CD4-positive, alpha-beta T cell (primary cell): ENCODE measurements at regions of chr9 and their contacts with region 1.

Region 1: DNA sequence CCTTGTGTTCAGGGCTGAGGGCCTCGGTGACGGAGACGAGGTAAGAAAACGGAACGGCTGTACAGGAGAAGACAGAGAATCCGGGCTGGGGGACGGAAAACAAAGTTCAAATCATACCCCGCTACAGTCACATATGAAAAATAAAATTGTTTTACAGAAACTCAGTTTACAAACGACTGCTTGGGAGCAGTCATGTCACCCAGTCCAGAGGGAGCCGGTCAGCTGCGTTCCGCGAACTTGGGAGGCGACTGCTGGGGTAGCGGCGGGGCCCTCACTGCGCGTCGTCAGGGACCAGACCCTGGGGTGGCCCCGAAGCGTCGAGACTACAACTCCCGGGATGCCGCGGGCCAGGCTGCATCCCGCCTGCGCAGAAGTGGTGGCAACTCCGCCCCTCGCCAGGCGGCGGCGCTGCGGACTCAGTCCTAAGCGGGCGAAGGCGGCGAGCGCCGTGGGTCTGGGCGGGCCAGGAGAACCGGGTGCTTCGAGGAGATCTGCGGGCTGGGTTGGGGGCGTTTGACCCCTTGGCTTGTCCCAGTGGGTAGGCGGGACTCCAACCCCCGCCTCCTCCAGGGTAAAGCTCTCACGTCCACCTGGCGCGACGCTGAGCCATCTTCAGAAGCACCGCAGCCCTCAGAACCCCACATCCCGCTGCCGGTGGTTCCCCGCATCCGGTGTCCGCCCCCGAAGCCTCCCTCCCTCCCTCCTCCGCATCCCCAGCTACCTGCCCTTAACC is 4.0 kb downstream of the SIT1 start:
- DNase-seq: peak; percentile 83 to 96 (median 88)
- ATAC-seq: peak; percentile 83
- H3K4me3 ChIP-seq: peak overlapping the region; percentile 72
- H3K4me3 Mint-ChIP-seq: peak overlapping the region; percentile 94
- H3K27ac ChIP-seq: peak overlapping the region; percentile 80 to 82
- H3K27ac Mint-ChIP-seq: peak overlapping the region; percentile 94
- H3K4me1 ChIP-seq: peaks cover 78% of the 10 kb centered on the region
- H3K4me1 Mint-ChIP-seq: peaks cover 73% of the 10 kb centered on the region
- H3K27me3 ChIP-seq: no peaks in the 10 kb centered on the region
- H3K27me3 Mint-ChIP-seq: no peaks in the 10 kb centered on the region
- CTCF ChIP-seq: peak; percentile 96

Region 2: DNA sequence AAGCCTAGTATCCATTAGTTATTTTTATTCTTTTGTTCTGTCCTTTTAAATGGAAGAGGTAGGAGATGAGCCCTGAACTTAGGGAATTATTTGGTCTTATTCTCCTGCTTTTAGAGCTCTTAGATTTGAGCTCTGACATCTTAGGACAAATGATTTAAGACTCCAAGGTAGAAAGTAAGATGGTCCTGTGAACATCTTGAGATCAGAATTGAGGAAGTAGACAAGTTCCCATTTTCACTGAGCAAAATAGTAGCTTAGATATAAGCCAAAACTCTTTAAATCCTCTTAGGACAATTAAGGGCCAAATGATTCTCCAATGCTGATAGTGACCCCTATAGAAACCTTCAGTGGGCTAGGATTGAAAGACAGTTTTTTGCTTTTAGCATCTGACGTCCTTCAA is 209.8 kb before region 1 on chr9:
- CTCF ChIA-PET with region 1: no interaction called
- POLR2A ChIA-PET with region 1: no interaction called
- intact Hi-C with region 1: no loop called
- DNase-seq: no peak
- ATAC-seq: no peak
- H3K4me3 ChIP-seq: no peak overlapping the region
- H3K4me3 Mint-ChIP-seq: no peak overlapping the region
- H3K27ac ChIP-seq: no peak overlapping the region
- H3K27ac Mint-ChIP-seq: no peak overlapping the region
- H3K4me1 ChIP-seq: no peaks in the 10 kb centered on the region
- H3K4me1 Mint-ChIP-seq: no peaks in the 10 kb centered on the region
- H3K27me3 ChIP-seq: no peaks in the 10 kb centered on the region
- H3K27me3 Mint-ChIP-seq: peaks cover 2% of the 10 kb centered on the region
- CTCF ChIP-seq: no peak

Region 3: DNA sequence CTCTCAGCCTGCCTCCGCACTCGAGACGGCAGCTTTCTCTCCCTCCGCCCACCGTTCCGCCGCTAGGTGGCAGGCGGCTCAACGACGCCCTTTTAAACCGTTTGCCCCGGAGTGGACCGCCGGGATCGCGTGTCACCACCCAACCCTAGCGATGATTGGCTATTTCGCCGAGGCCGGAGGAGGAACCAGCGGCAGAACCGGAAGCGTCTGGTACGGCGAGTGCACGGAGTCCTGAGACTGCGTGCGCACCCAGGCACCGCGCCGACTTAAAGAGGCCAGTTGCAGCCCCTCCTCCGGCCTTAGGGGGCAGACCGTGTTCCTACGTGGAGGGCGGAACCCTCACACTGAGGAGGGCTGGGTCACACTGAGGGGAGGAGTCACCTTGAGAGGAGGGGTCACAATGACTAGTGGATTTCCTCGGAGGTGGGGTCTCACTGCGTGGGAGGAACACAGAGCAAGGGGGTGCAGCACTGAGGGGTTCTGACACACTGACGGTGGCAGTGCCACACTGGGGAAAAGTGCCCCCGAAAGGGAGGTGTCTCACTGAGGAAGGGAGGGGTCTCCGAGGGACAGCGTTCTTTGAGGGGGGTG is 42.6 kb before region 1 on chr9:
- CTCF ChIA-PET with region 1: interaction called, 31 read pairs
- POLR2A ChIA-PET with region 1: interaction called, 45 read pairs
- intact Hi-C with region 1: loop called (anchors 1 to 2 kb)
- DNase-seq: peak; percentile 98 to 100 (median 99)
- ATAC-seq: peak; percentile 88
- H3K4me3 ChIP-seq: peak overlapping the region; percentile 94
- H3K4me3 Mint-ChIP-seq: peak overlapping the region; percentile 99
- H3K27ac ChIP-seq: peak overlapping the region; percentile 73 to 89
- H3K27ac Mint-ChIP-seq: peak overlapping the region; percentile 96
- H3K4me1 ChIP-seq: peaks cover 43% of the 10 kb centered on the region
- H3K4me1 Mint-ChIP-seq: peaks cover 33% of the 10 kb centered on the region
- H3K27me3 ChIP-seq: no peaks in the 10 kb centered on the region
- H3K27me3 Mint-ChIP-seq: no peaks in the 10 kb centered on the region
- CTCF ChIP-seq: peak; percentile 98

Region 4: GRCh38 chr9:35616681-35617459 is 29.8 kb before region 1 on chr9:
- CTCF ChIA-PET with region 1: interaction called, 26 read pairs
- POLR2A ChIA-PET with region 1: interaction called, 35 read pairs
- intact Hi-C with region 1: no loop called
- DNase-seq: peak; percentile 42 to 89 (median 62)
- ATAC-seq: peak; percentile 86
- H3K4me3 ChIP-seq: peak overlapping the region; percentile 77
- H3K4me3 Mint-ChIP-seq: peak overlapping the region; percentile 86
- H3K27ac ChIP-seq: peak overlapping the region; percentile 27 to 70
- H3K27ac Mint-ChIP-seq: peak overlapping the region; percentile 72
- H3K4me1 ChIP-seq: peaks cover 40% of the 10 kb centered on the region
- H3K4me1 Mint-ChIP-seq: peaks cover 50% of the 10 kb centered on the region
- H3K27me3 ChIP-seq: no peaks in the 10 kb centered on the region
- H3K27me3 Mint-ChIP-seq: no peaks in the 10 kb centered on the region
- CTCF ChIP-seq: peak; percentile 47

Region 5: GRCh38 chr9:35664531-35665470 is 18.1 kb after region 1 on chr9 and contains the start of gene ARHGEF39:
- CTCF ChIA-PET with region 1: interaction called, 94 read pairs
- POLR2A ChIA-PET with region 1: interaction called, 27 read pairs
- intact Hi-C with region 1: no loop called
- DNase-seq: peak in 12 of 14 experiments; percentile 35 to 84 (median 55)
- ATAC-seq: peak; percentile 74
- H3K4me3 ChIP-seq: peak within 1 kb of the TSS; percentile 61
- H3K4me3 Mint-ChIP-seq: peak within 1 kb of the TSS; percentile 85
- H3K27ac ChIP-seq: peak within 1 kb of the TSS; percentile 31 to 50
- H3K27ac Mint-ChIP-seq: peak within 1 kb of the TSS; percentile 85
- H3K4me1 ChIP-seq: peaks cover 61% of the 10 kb centered on the region
- H3K4me1 Mint-ChIP-seq: peaks cover 71% of the 10 kb centered on the region
- H3K27me3 ChIP-seq: no peaks in the 10 kb centered on the region
- H3K27me3 Mint-ChIP-seq: no peaks in the 10 kb centered on the region
- CTCF ChIP-seq: no peak
- total RNA-seq, gene ARHGEF39: 0.08 to 0.17 TPM

Region 6: GRCh38 chr9:35690431-35691333 is 44.0 kb after region 1 on chr9:
- CTCF ChIA-PET with region 1: interaction called, 32 read pairs
- POLR2A ChIA-PET with region 1: interaction called, 14 read pairs
- intact Hi-C with region 1: no loop called
- DNase-seq: peak in 8 of 14 experiments; percentile 12 to 57 (median 38)
- ATAC-seq: peak; percentile 63
- H3K4me3 ChIP-seq: peak overlapping the region; percentile 88
- H3K4me3 Mint-ChIP-seq: peak overlapping the region; percentile 92
- H3K27ac ChIP-seq: peak overlapping the region; percentile 40 to 55
- H3K27ac Mint-ChIP-seq: peak overlapping the region; percentile 73
- H3K4me1 ChIP-seq: peaks cover 26% of the 10 kb centered on the region
- H3K4me1 Mint-ChIP-seq: peaks cover 28% of the 10 kb centered on the region
- H3K27me3 ChIP-seq: no peaks in the 10 kb centered on the region
- H3K27me3 Mint-ChIP-seq: no peaks in the 10 kb centered on the region
- CTCF ChIP-seq: no peak

Region 7: DNA sequence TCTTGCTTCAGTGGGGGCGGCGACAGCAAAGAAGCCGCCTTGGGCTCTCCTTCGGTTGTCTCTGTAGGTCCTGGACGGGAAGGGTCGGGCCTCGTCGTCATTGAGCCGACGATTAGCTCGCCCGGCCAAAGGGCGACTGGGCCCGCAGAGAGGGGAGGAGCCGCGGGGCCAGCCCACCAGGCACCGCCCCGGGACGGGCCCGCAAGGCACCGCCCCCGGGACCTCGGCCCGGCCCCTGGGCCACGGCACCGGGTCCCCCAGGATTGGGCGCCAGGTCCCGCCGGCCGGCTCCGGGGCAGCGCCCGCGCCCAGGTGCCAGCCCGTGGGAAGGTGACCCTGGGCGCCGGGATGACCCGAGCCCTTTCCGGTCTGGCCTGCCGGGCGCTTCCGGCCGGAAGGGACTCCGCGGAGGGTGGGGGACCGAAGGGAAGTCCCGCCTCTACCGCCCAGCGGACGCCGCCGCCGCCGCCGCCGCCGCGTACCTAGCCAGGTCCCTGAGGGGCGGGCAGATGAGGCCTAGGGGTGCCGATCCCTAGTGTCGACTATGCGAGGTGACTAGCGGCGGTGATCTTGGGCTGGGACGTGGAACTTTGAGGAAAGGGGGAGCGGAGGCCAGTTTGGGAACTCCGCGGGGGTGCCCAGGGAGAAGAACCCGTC is 102.3 kb after region 1 on chr9 and contains the starts of genes GBA2 and RGP1:
- CTCF ChIA-PET with region 1: interaction called, 6 read pairs
- POLR2A ChIA-PET with region 1: interaction called, 12 read pairs
- intact Hi-C with region 1: loop called in 1 of 2 experiments (anchors 5 kb)
- DNase-seq: peak; percentile 25 to 77 (median 58)
- ATAC-seq: peak; percentile 59
- H3K4me3 ChIP-seq: peak within 1 kb of the TSS; percentile 98
- H3K4me3 Mint-ChIP-seq: peak within 1 kb of the TSS; percentile 99
- H3K27ac ChIP-seq: peak within 1 kb of the TSS; percentile 65 to 85
- H3K27ac Mint-ChIP-seq: peak within 1 kb of the TSS; percentile 88
- H3K4me1 ChIP-seq: peaks cover 48% of the 10 kb centered on the region
- H3K4me1 Mint-ChIP-seq: peaks cover 51% of the 10 kb centered on the region
- H3K27me3 ChIP-seq: no peaks in the 10 kb centered on the region
- H3K27me3 Mint-ChIP-seq: no peaks in the 10 kb centered on the region
- CTCF ChIP-seq: no peak
- total RNA-seq, gene GBA2: 17.3 to 18.6 TPM
- total RNA-seq, gene RGP1: 12.6 to 13.1 TPM